ENCODE measurements at regions of chr12 and their contacts with region 1.

Region 1: DNA sequence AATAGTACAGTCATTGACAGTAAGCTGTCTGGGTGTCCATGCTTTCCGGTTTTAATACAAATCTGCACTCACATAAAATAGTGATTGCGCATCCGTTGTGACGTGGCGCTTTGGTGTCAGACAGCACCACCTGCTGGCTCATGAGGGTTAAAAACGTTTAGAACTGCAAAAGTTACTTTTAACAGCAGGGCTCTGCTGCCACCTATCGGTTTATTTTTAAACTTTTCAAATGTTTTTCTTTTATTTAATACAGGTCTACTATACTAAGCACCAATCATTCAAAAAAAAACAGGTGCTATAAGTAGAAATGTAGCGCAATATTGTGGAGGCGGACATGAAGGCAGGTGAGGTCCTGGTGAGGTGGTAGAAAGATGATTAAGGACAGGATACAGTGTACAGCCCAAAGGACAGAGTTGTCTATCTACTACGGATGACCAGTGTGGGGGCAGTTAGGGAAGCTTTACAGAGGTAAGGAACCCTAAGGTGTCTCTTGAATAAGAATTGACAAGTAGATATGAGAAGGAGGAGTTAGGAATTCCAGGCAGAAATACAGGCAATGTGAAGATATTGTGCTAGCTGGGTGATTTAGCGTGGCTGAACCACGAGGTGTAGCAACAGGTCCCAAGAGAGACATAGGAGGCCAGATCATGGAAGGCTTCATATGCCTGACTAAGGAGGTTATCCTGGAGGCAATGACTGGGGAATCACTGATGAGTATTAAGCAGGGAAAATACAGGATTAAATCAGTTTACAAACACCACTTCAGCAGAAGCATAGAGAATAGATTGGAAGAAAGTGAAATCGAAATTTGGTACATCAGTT is 91.5 kb upstream of the PRB2 start:
- DNase-seq: peak; percentile 45 to 81
- ATAC-seq: peak in 7 of 8 donors; percentile 47 to 75 (median 71)
- H3K4me3 ChIP-seq: no peak overlapping the region
- H3K27ac ChIP-seq: no peak overlapping the region
- H3K4me1 ChIP-seq: peaks cover 0 to 6% (median 0%) of the 10 kb centered on the region in 9 donors
- H3K27me3 ChIP-seq: peaks cover 0 to 18% (median 0%) of the 10 kb centered on the region in 7 donors
- CTCF ChIP-seq: peak; percentile 94 to 99 (median 98)

Region 2: GRCh38 chr12:10771132-10771733 is 715.6 kb before region 1 on chr12:
- intact Hi-C with region 1: loop called (anchors 1 to 10 kb)
- DNase-seq: no peak
- ATAC-seq: peak in 2 of 8 donors; percentile 51 to 64
- H3K4me3 ChIP-seq: no peak overlapping the region
- H3K27ac ChIP-seq: no peak overlapping the region
- H3K4me1 ChIP-seq: no peaks in the 10 kb centered on the region
- H3K27me3 ChIP-seq: peaks cover 0 to 74% (median 54%) of the 10 kb centered on the region in 7 donors
- CTCF ChIP-seq: peak; percentile 52 to 85 (median 70)

Region 3: DNA sequence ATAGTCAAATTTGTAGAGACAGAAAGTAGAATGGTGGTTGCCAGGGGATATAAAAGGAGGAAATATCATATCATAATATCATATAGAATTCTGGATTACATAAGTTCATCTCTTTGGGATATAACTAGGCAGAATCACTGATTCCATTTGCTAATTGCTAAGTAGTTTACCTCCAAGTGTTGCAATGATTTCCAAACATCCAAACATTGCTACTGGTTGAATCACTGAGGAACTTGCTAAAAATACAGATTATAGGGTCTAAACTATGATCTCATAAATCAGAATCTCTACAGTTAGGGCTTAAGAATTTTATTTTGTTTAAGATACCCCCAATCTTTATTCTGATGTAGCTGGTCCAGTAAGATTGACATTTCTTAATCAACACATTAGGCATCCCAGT is 284.0 kb before region 1 on chr12:
- intact Hi-C with region 1: loop called in 2 of 10 experiments (anchors 10 kb)
- DNase-seq: no peak
- ATAC-seq: no peak
- H3K4me3 ChIP-seq: no peak overlapping the region
- H3K27ac ChIP-seq: no peak overlapping the region
- H3K4me1 ChIP-seq: no peaks in the 10 kb centered on the region
- H3K27me3 ChIP-seq: no peaks in the 10 kb centered on the region
- CTCF ChIP-seq: no peak

Region 4: DNA sequence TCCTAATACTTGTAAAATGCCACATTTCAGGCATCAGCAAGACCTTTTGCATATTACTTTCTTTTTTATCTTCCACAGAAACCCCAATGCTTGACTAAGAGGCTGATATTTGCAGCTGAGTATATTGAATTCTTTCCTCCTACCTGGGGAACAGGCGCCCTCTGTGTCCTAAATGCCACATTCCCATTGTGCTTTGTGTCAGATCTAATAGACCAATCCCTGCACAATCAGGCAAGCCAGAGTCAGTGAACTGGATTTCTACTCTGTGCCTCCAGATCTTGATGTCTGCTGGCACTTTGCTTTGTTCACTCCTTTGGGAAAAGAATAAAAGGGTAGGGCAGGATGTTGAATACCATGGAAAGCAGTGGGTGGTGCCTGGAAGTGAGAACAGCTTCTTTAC is 277.7 kb before region 1 on chr12:
- intact Hi-C with region 1: loop called in 1 of 10 experiments (anchors 10 kb)
- DNase-seq: no peak
- ATAC-seq: no peak
- H3K4me3 ChIP-seq: no peak overlapping the region
- H3K27ac ChIP-seq: no peak overlapping the region
- H3K4me1 ChIP-seq: no peaks in the 10 kb centered on the region
- H3K27me3 ChIP-seq: no peaks in the 10 kb centered on the region
- CTCF ChIP-seq: no peak

Region 5: DNA sequence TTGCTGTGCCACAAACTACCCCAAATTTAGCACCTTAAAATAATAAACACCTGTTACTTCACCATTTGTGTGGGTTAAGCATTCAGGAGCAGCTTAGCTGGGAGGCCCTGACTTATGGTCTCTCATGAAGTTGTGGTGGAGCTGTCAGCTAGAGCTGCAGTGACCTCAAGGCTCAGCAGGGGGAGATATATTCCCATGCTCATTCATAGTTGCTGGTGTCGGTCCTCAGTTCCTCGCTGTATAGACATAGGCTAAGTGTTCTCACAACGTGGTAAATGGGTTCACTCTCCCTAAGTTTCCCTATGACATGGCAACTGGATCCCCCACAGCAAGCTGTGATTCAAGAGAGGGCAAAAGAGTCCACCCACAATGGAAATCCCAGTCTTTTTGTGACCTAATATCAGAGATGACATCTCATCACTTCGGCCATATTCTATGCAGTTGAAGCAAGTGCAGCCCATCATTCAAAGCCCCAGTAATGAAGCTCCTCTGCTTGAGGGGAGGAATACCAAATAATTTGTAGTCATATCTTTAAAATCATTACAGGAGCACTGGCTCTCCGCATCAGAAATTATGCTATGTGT is 258.4 kb before region 1 on chr12:
- intact Hi-C with region 1: loop called in 5 of 10 experiments (anchors 5 to 10 kb)
- DNase-seq: no peak
- ATAC-seq: no peak
- H3K4me3 ChIP-seq: no peak overlapping the region
- H3K27ac ChIP-seq: no peak overlapping the region
- H3K4me1 ChIP-seq: no peaks in the 10 kb centered on the region
- H3K27me3 ChIP-seq: no peaks in the 10 kb centered on the region
- CTCF ChIP-seq: peak in 7 of 9 donors; percentile 25 to 56 (median 43)

Region 6: GRCh38 chr12:11238275-11238674 is 248.6 kb before region 1 on chr12:
- intact Hi-C with region 1: loop called in 2 of 10 experiments (anchors 10 kb)
- DNase-seq: no peak
- ATAC-seq: peak in 3 of 8 donors; percentile 25 to 70 (median 53)
- H3K4me3 ChIP-seq: no peak overlapping the region
- H3K27ac ChIP-seq: no peak overlapping the region
- H3K4me1 ChIP-seq: no peaks in the 10 kb centered on the region
- H3K27me3 ChIP-seq: no peaks in the 10 kb centered on the region
- CTCF ChIP-seq: no peak

Region 7: GRCh38 chr12:11361151-11361550 is 125.7 kb before region 1 on chr12:
- intact Hi-C with region 1: no loop called
- DNase-seq: no peak
- ATAC-seq: no peak
- H3K4me3 ChIP-seq: no peak overlapping the region
- H3K27ac ChIP-seq: no peak overlapping the region
- H3K4me1 ChIP-seq: no peaks in the 10 kb centered on the region
- H3K27me3 ChIP-seq: no peaks in the 10 kb centered on the region
- CTCF ChIP-seq: no peak